Posterior cingulate gyrus (tissue), 11 donors: ENCODE measurements at regions of chr4 and their contacts with region 1.

Region 1: DNA sequence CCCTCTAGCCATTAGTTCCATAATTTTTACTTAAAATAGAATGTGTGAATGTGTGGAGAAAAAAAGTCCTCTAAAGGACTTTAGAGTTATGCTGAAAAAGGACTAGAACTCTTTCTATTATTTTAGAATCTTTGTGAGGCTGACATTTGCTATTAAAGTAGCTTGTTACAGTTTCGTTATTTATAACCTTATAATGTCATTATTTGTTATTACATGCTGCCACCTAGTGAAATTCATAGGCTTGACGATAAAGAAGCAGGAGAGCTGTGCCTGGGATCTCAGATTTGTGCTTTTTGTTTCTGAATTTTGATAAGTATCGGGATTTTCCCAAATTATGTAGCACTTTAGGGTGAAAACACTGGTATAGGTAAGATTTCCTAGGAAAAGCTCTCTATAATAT is 38.5 kb upstream of the TAPT1 start:
- DNase-seq: no peak

Region 2: DNA sequence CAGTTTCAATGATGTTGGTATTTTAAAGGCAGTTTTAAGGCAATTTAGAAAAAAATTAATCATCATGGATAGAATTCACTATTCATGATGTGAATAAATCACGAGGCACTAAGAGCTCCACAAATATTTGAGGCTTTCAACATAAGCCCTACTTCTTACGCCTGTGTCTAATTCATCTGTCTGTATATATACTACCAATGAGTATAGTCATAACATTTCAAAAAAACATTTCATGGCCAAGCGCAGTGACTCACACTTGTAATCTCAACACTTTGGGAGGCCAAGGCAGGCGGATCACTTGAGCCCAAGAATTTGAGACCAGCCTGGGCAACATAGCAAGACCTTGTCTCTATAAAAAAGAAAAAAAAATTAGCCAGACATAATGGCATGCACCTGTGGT is 666.2 kb before region 1 on chr4:
- intact Hi-C with region 1: no loop called
- DNase-seq: no peak

Region 3: DNA sequence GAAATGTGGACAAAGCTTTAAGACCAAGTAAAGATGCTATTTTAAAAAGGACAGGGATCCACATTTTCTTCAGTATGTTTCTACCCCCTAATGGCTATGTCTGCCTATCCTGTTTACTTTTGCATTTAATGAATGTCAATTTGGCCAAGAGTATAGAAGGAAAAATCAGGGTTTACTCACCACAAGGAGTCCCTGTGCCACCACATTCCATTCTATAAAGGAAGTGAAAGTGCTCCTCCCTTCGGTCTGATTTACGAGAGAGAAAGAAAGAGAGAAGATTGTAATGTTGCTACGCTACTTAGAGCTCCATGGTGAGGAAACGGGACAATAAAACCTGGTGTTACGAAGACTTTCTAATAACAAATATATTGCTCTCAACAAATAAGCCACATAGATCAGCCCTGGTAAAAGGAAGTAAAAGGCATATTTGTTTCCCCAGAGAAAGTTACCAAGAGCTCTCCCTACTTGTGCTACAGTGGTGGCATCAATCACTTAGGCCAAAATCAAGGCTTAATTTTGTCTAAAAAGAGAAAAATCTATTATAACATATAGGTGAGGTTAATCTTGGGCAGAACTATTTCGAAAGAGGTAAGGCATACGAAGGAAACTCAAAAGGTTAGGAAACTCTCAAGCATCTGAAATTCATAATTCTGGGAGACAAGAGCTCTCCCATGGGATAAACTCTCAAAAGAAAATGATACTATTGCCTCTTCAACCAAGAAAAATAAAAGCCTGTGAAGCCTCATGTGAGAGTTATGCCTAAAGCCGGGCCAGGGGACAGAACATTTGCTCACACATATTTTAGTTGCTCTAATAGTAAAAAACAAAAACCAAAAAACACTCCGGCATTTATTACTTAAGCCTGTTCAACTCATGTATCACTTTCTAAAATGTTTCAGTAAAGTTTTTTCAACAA is 68.1 kb before region 1 on chr4:
- intact Hi-C with region 1: loop called (anchors 5 kb)
- DNase-seq: no peak